HEK293T (cell line): ENCODE measurements at regions of chr11 and their contacts with region 1.

Region 1: GRCh38 chr11:119095066-119095880 is 6.4 kb downstream of the DPAGT1 start:
- DNase-seq: peak; percentile 97

Region 2: GRCh38 chr11:119057000-119057769 is 38.1 kb before region 1 on chr11 and contains the start of gene HYOU1:
- CTCF ChIA-PET with region 1: no interaction called
- POLR2A ChIA-PET with region 1: interaction called, 17 read pairs
- DNase-seq: peak; percentile 96

Region 3: DNA sequence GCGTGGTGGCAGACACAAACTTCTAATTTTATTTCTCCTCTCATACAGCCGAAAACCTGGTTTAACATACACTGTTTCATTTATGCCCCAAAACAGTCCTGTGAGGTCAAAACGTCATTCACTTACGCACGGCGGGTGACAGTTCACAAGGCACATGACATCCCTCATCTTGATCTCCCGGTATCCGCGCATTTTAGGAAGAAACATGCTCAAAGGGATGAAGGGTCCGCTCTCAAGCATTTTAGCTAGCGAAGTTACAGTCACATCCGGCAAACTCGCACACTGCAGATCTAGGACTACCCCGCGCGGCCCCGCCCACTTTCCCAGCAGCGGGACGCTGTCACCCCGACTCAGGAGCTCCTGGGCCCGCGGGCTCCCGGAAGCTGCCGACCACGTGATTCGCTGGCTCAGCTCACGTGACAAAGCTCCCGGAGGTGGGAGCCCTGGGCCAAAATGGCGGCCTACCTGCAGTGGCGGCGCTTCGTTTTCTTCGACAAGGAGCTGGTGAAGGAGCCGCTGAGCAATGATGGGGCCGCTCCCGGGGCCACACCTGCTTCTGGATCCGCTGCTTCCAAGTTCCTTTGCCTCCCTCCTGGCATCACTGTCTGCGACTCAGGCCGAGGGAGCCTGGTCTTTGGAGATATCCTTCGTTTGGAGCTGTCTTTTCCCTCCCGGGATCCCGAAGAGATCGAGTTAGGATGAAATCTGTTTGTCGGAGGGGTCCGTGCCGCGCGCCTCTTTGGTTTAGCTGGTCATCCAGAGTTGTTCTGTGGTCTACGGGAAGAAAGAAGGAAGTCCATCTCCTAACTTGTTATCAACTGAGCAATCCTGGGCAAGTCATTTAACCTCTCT is 27.7 kb before region 1 on chr11 and contains the start of gene VPS11:
- CTCF ChIA-PET with region 1: no interaction called
- POLR2A ChIA-PET with region 1: interaction called, 15 read pairs
- DNase-seq: peak; percentile 98

Region 4: GRCh38 chr11:119077839-119078238 is 17.4 kb before region 1 on chr11:
- CTCF ChIA-PET with region 1: no interaction called
- POLR2A ChIA-PET with region 1: interaction called, 14 read pairs
- DNase-seq: no peak

Region 5: GRCh38 chr11:119121008-119121810 is 25.9 kb after region 1 on chr11 and contains the start of gene HINFP:
- CTCF ChIA-PET with region 1: no interaction called
- POLR2A ChIA-PET with region 1: interaction called, 21 read pairs
- DNase-seq: peak; percentile 99

Region 6: DNA sequence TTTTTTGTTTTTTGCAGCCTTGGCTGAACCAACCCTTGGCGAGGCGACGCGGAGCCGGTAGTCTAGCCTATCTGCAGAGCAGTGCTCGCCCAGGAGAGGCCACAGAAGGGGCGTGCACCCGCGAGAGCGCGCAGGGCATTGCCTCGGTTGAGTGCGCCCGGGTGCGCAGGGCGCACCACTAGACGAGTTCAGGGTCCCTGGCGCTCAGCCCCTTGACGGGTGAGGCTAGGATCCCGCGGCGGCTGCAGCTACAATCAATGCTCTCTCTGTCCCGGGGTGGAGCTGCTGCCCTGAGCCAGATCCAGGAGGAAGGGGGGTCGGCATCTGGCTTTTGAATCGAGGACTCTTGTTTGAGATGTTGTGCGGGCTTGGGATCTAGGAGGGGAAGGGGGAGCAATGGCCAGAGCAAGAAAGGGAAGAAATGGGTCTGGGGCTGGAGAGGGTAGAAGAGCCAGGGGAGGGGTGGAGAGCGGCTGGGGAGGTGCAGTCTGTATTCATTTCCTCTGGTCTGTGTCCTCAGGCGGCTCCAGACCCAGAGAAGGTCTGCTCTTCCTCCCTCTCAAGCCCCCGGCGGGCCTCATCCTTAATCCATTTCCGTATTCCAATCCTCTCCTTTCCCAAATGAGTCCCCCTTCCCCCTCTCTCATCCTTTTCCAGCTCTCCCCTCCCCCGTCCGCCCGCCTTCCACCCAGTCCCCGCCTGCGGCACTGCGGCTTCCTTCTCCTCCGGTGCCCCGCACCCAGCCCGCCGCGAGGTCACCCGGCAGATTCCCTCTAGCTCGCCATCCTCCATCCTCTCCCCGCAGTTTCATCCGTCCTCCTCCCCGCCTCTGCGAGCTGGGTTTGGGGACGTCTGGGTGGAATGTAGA is 326.9 kb after region 1 on chr11:
- CTCF ChIA-PET with region 1: no interaction called
- POLR2A ChIA-PET with region 1: no interaction called
- DNase-seq: no peak